GM12878 (cell line): ENCODE measurements at regions of chr12 and their contacts with region 1.

Region 1: DNA sequence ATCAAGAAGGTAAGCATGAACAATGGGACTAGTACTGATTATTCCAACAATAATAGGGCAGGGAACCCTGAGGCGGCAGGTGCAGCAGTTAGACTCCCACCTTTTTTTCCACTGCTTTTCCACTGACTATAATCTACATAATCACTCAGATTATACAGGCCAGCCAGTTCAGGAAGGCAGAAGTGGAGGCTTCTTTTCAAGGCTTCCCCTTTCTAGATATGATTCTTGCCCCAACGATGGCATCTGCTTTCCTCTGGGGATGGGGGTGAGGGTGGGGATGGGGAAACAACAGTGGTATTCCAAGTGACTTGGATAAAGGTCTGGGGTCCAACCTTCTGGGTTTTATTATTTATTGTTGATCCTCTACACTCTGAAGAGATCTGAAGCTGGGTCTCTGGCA is 331 bp downstream of the NCKAP1L start:
- DNase-seq: no peak
- ATAC-seq: peak; percentile 3
- H3K4me3 ChIP-seq: peak overlapping the region; percentile 82
- H3K27ac ChIP-seq: peak overlapping the region; percentile 91
- H3K4me1 ChIP-seq: peaks cover 3% of the 10 kb centered on the region; the same call in 1 of the 2 replicates
- H3K27me3 ChIP-seq: no peaks in the 10 kb centered on the region
- CTCF ChIP-seq: no peak
- EP300 ChIP-seq: no peak
- POLR2A ChIP-seq: no peak
- RAD21 ChIP-seq: no peak

Region 2: GRCh38 chr12:54279866-54280467 is 217.9 kb before region 1 on chr12 and contains the start of gene CBX5:
- CTCF ChIA-PET with region 1: no interaction called
- POLR2A ChIA-PET with region 1: interaction called, 18 read pairs
- RAD21 ChIA-PET with region 1: no interaction called
- SMC1A ChIA-PET with region 1: interaction called, 3 read pairs
- in situ Hi-C with region 1: no loop called
- intact Hi-C with region 1: no loop called
- DNase-seq: peak; percentile 98
- ATAC-seq: peak; percentile 48
- H3K4me3 ChIP-seq: peak within 1 kb of the TSS; percentile 81
- H3K27ac ChIP-seq: peak within 1 kb of the TSS; percentile 99
- H3K4me1 ChIP-seq: peaks cover 18% of the 10 kb centered on the region
- H3K27me3 ChIP-seq: no peaks in the 10 kb centered on the region
- CTCF ChIP-seq: no peak
- EP300 ChIP-seq: no peak
- POLR2A ChIP-seq: peak; percentile 83
- RAD21 ChIP-seq: no peak
- polyA plus RNA-seq, gene CBX5: 66.9 to 67.1 TPM

Region 3: DNA sequence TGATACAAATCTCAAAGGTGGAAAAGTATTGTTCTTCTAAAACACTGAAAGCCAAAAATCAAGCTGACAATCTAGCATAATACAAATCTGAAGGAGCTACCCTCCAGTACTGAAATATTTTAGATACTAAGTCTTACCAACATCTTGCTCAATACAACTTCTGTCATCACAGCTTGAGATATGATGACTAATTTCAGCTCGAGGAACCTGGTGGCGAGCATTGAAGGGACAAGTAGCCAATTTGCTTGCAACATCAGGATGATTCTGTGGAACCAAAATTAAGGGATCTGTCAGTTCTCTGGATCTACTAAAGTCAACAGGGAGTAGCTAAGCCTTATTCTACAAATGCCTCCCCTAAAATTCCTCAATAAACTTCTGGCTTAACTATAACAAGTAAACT is 34.8 kb before region 1 on chr12:
- CTCF ChIA-PET with region 1: interaction called, 5 read pairs
- POLR2A ChIA-PET with region 1: interaction called, 10 read pairs
- RAD21 ChIA-PET with region 1: interaction called, 3 read pairs
- SMC1A ChIA-PET with region 1: interaction called, 6 read pairs
- in situ Hi-C with region 1: no loop called
- intact Hi-C with region 1: no loop called
- DNase-seq: no peak
- ATAC-seq: no peak
- H3K4me3 ChIP-seq: no peak overlapping the region
- H3K27ac ChIP-seq: no peak overlapping the region
- H3K4me1 ChIP-seq: peaks cover 3% of the 10 kb centered on the region; the same call in 1 of the 2 replicates
- H3K27me3 ChIP-seq: no peaks in the 10 kb centered on the region
- CTCF ChIP-seq: no peak
- EP300 ChIP-seq: no peak
- POLR2A ChIP-seq: no peak
- RAD21 ChIP-seq: no peak

Region 4: GRCh38 chr12:54526812-54527630 is 29.1 kb after region 1 on chr12:
- CTCF ChIA-PET with region 1: interaction called, 18 read pairs
- POLR2A ChIA-PET with region 1: no interaction called
- RAD21 ChIA-PET with region 1: interaction called, 4 read pairs
- SMC1A ChIA-PET with region 1: interaction called, 3 read pairs
- in situ Hi-C with region 1: no loop called
- intact Hi-C with region 1: no loop called
- DNase-seq: no peak
- ATAC-seq: peak; percentile 58
- H3K4me3 ChIP-seq: no peak overlapping the region
- H3K27ac ChIP-seq: no peak overlapping the region
- H3K4me1 ChIP-seq: no peaks in the 10 kb centered on the region
- H3K27me3 ChIP-seq: no peaks in the 10 kb centered on the region
- CTCF ChIP-seq: peak; percentile 44 to 60 (median 58)
- EP300 ChIP-seq: no peak
- POLR2A ChIP-seq: no peak
- RAD21 ChIP-seq: peak; percentile 28; the same call in 1 of the 2 replicates